Heart right ventricle (tissue), 16 donors: ENCODE measurements at regions of chr12 and their contacts with region 1.

Region 1: GRCh38 chr12:52004042-52004648 is 2.6 kb upstream of the TAMALIN start:
- DNase-seq: peak; percentile 40 to 63
- ATAC-seq: peak in 5 of 8 donors; percentile 12 to 33 (median 25)
- H3K4me3 ChIP-seq: no peak overlapping the region
- H3K27ac ChIP-seq: peak overlapping the region in 2 of 10 donors; percentile 25 to 41
- H3K4me1 ChIP-seq: peaks cover 4 to 46% (median 25%) of the 10 kb centered on the region in 9 donors
- H3K27me3 ChIP-seq: peaks cover 0 to 30% (median 11%) of the 10 kb centered on the region in 7 donors
- CTCF ChIP-seq: peak; percentile 58 to 78 (median 73)

Region 2: DNA sequence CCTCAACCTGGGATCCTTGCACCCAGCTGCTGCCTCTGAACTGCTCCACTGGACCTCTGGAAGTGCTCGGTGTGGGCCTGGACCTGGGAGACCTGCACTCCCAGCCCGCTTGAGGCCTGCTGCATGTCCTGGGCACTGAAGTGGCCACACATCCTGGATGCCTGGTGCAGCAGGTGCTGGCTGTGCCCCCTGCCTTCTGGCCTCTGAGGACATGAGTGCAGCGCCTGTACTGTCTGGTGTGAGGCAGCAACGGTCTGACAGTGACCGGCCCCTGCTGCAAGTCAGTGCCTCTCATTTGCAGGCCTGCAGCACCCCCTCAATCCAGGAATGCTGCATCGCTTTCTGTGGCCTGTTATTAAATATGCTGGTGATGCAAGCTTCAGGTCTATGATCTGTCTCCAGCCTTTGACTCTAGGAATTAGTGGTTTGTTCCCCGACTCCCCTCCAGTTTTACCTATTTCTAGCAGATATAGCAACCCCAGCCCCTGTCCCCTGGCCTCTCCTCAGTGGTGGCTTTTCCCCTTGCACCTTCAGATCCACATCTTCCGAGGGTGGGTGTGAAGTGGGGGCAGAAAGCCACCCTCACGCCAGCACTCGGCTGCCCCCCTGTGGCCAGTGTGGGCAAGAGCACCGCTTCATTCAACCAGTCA is 79.0 kb after region 1 on chr12:
- intact Hi-C with region 1: loop called in 4 of 10 experiments (anchors 1 to 5 kb)
- DNase-seq: peak; percentile 68 to 72
- ATAC-seq: peak; percentile 25 to 70 (median 50)
- H3K4me3 ChIP-seq: no peak overlapping the region
- H3K27ac ChIP-seq: peak overlapping the region in 9 of 10 donors; percentile 25 to 86 (median 74)
- H3K4me1 ChIP-seq: peaks cover 14 to 38% (median 34%) of the 10 kb centered on the region in 9 donors
- H3K27me3 ChIP-seq: peaks cover 0 to 16% (median 0%) of the 10 kb centered on the region in 7 donors
- CTCF ChIP-seq: peak; percentile 92 to 99 (median 97)

Region 3: GRCh38 chr12:52087961-52088820 is 84.0 kb after region 1 on chr12:
- intact Hi-C with region 1: loop called in 4 of 10 experiments (anchors 1 to 5 kb)
- DNase-seq: no peak
- ATAC-seq: no peak
- H3K4me3 ChIP-seq: no peak overlapping the region
- H3K27ac ChIP-seq: no peak overlapping the region
- H3K4me1 ChIP-seq: peaks cover 2 to 4% (median 2%) of the 10 kb centered on the region in 9 donors
- H3K27me3 ChIP-seq: peaks cover 0 to 44% (median 27%) of the 10 kb centered on the region in 7 donors
- CTCF ChIP-seq: no peak